ENCODE measurements at regions of chr18 and their contacts with region 1.

Region 1: GRCh38 chr18:35756506-35757117 is 175.1 kb downstream of the GALNT1 start:
- DNase-seq: peak; percentile 37
- H3K4me3 ChIP-seq: no peak overlapping the region
- H3K27ac ChIP-seq: no peak overlapping the region
- H3K4me1 ChIP-seq: peaks cover 0 to 4% (median 2%) of the 10 kb centered on the region in 4 donors
- H3K27me3 ChIP-seq: no peaks in the 10 kb centered on the region
- CTCF ChIP-seq: peak; percentile 76 to 78 (median 77)
- EP300 ChIP-seq: no peak
- POLR2A ChIP-seq: no peak

Region 2: GRCh38 chr18:35949903-35950627 is 193.5 kb after region 1 on chr18:
- intact Hi-C with region 1: loop called (anchors 2 kb)
- DNase-seq: no peak
- H3K4me3 ChIP-seq: peak overlapping the region; percentile 64 to 77 (median 71)
- H3K27ac ChIP-seq: peak overlapping the region; percentile 74 to 77 (median 76)
- H3K4me1 ChIP-seq: peaks cover 5 to 21% (median 12%) of the 10 kb centered on the region in 4 donors
- H3K27me3 ChIP-seq: peaks cover 0 to 3% (median 0%) of the 10 kb centered on the region in 4 donors
- CTCF ChIP-seq: peak in 2 of 3 experiments; percentile 90 to 96
- EP300 ChIP-seq: no peak
- POLR2A ChIP-seq: no peak